Calu3 (cell line): ENCODE measurements at regions of chr15 and their contacts with region 1.

Region 1: GRCh38 chr15:92868992-92869988 is 30.8 kb upstream of the CHD2 start:
- DNase-seq: no peak
- H3K4me3 Mint-ChIP-seq: no peak overlapping the region
- H3K27ac Mint-ChIP-seq: no peak overlapping the region
- H3K4me1 Mint-ChIP-seq: peaks cover 19% of the 10 kb centered on the region
- H3K27me3 Mint-ChIP-seq: no peaks in the 10 kb centered on the region
- CTCF ChIP-seq: no peak

Region 2: GRCh38 chr15:92845126-92845508 is 24.2 kb before region 1 on chr15:
- CTCF ChIA-PET with region 1: no interaction called
- intact Hi-C with region 1: loop called (anchors 1 kb)
- DNase-seq: peak; percentile 36
- H3K4me3 Mint-ChIP-seq: peak overlapping the region; percentile 36
- H3K27ac Mint-ChIP-seq: peak overlapping the region; percentile 87
- H3K4me1 Mint-ChIP-seq: peaks cover 16% of the 10 kb centered on the region
- H3K27me3 Mint-ChIP-seq: no peaks in the 10 kb centered on the region
- CTCF ChIP-seq: no peak